GM12878 (cell line): ENCODE measurements at regions of chr14 and their contacts with region 1.

Region 1: DNA sequence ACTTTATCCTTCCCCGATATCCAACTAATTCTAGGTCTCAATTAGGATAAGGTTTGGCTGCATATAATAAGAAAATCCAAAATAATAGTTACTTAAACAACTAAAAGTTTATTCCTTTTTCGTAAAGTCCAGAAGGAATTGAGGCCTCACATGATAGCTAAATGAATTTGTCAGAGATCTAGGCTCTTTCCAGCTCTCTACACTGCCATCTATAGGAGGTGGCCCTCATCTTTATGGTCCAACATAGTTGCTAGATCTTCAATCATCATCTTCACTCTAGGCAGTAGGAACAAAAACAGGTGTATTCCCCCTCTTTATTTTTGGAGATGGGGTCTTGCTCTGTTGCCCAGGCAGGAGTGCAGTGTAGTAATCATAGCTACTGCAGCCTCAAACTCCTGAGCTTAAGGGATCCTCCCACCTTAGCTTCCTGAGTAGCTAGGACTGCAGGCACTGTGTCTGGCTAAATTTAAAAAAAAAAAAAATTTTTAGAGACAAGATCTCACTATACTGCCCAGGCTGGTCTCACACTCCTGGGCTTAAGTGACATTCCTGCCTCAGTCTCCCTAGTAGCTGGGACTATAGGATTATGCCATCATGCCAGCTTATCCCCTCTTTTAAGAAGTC is 46.5 kb upstream of the SAV1 start:
- DNase-seq: no peak
- ATAC-seq: peak; percentile 85
- H3K4me3 ChIP-seq: no peak overlapping the region
- H3K27ac ChIP-seq: no peak overlapping the region
- H3K4me1 ChIP-seq: no peaks in the 10 kb centered on the region
- H3K27me3 ChIP-seq: no peaks in the 10 kb centered on the region
- CTCF ChIP-seq: peak; percentile 50 to 54 (median 52); a peak in 5 of 6 replicates
- EP300 ChIP-seq: no peak
- POLR2A ChIP-seq: no peak
- RAD21 ChIP-seq: peak; percentile 64

Region 2: GRCh38 chr14:50542941-50543418 is 171.6 kb before region 1 on chr14:
- CTCF ChIA-PET with region 1: interaction called, 9 read pairs
- POLR2A ChIA-PET with region 1: no interaction called
- RAD21 ChIA-PET with region 1: no interaction called
- SMC1A ChIA-PET with region 1: interaction called, 4 read pairs
- in situ Hi-C with region 1: no loop called
- intact Hi-C with region 1: loop called (anchors 2 kb)
- DNase-seq: no peak
- ATAC-seq: peak; percentile 94
- H3K4me3 ChIP-seq: no peak overlapping the region
- H3K27ac ChIP-seq: no peak overlapping the region
- H3K4me1 ChIP-seq: peaks cover 3% of the 10 kb centered on the region; the same call in 1 of the 2 replicates
- H3K27me3 ChIP-seq: no peaks in the 10 kb centered on the region
- CTCF ChIP-seq: peak; percentile 47 to 59 (median 52)
- EP300 ChIP-seq: no peak
- POLR2A ChIP-seq: no peak
- RAD21 ChIP-seq: peak; percentile 52

Region 3: DNA sequence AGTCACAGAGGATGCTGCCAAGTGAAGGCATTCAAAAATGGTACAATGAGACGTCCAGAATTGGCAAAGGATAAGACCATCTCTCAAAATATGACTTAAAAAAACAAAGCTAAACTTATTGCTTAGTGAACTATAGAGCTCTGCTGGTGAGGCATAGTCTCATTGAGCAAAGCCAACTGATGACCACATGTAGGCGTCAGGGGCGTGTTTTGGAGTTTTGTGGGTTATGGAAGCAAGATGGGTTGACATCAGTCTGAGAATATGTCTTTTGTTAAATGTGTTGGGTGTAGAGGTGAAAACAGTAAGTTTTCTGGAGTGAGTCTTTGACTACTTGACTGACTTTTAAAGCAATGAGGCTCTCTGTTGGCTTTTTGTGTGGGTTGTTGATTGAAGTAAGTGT is 107.4 kb before region 1 on chr14:
- CTCF ChIA-PET with region 1: interaction called, 23 read pairs
- POLR2A ChIA-PET with region 1: no interaction called
- RAD21 ChIA-PET with region 1: interaction called, 5 read pairs
- SMC1A ChIA-PET with region 1: interaction called, 34 read pairs
- in situ Hi-C with region 1: no loop called
- intact Hi-C with region 1: no loop called
- DNase-seq: no peak
- ATAC-seq: peak; percentile 61
- H3K4me3 ChIP-seq: no peak overlapping the region
- H3K27ac ChIP-seq: no peak overlapping the region
- H3K4me1 ChIP-seq: no peaks in the 10 kb centered on the region
- H3K27me3 ChIP-seq: no peaks in the 10 kb centered on the region; a peak in 1 of 4 replicates
- CTCF ChIP-seq: no peak
- EP300 ChIP-seq: no peak
- POLR2A ChIP-seq: no peak
- RAD21 ChIP-seq: no peak

Region 4: DNA sequence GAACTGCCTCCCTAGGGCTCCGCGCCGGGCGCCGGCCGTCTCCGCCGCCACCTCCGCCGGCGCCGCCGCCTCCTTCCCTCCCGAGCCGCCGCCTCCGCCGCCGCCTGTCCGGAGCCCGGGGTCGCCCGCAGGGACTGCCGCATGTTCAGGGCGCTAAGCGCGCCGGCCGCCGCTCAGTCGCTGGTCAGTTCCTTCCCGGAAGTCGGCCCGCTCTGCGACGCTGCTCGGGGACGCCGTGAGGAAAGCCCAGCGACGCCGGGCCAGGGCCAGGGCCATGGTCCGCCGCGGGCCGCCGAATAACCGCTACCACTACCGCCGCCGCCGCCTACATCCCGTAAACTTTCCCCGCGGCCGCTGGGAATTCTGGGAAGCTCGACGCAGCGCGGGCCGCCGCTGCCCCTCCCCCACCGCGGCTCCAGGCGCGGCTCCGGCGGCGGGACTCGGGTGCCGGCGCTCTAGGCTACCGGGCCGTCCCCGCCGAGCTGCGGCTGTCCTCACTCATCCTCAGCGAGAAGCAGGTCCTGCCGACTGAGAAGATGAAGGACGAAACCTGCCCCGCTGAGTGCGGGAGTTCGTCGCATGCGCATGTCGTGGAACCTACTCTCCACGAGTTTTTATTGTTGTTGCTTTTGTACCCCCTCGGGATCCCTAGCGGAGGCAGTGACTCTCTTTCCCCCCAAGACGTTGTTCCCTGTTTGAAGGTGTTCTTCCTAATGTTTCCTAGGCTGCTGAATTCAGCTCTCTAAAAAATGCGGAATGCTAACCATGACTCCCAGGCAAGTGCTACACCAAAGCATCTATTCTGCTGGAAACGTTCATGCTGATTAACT is 46.4 kb before region 1 on chr14 and contains the start of gene SAV1:
- CTCF ChIA-PET with region 1: interaction called, 10 read pairs
- POLR2A ChIA-PET with region 1: no interaction called
- RAD21 ChIA-PET with region 1: interaction called, 4 read pairs
- SMC1A ChIA-PET with region 1: interaction called, 6 read pairs
- in situ Hi-C with region 1: no loop called
- intact Hi-C with region 1: loop called (anchors 5 kb)
- DNase-seq: no peak
- ATAC-seq: peak; percentile 78
- H3K4me3 ChIP-seq: peak within 1 kb of the TSS; percentile 90
- H3K27ac ChIP-seq: peak within 1 kb of the TSS; percentile 30
- H3K4me1 ChIP-seq: no peaks in the 10 kb centered on the region
- H3K27me3 ChIP-seq: no peaks in the 10 kb centered on the region
- CTCF ChIP-seq: no peak
- EP300 ChIP-seq: no peak
- POLR2A ChIP-seq: peak; percentile 84
- RAD21 ChIP-seq: peak; percentile 11; the same call in 1 of the 2 replicates
- polyA plus RNA-seq, gene SAV1: 10.1 to 15.1 TPM

Region 5: DNA sequence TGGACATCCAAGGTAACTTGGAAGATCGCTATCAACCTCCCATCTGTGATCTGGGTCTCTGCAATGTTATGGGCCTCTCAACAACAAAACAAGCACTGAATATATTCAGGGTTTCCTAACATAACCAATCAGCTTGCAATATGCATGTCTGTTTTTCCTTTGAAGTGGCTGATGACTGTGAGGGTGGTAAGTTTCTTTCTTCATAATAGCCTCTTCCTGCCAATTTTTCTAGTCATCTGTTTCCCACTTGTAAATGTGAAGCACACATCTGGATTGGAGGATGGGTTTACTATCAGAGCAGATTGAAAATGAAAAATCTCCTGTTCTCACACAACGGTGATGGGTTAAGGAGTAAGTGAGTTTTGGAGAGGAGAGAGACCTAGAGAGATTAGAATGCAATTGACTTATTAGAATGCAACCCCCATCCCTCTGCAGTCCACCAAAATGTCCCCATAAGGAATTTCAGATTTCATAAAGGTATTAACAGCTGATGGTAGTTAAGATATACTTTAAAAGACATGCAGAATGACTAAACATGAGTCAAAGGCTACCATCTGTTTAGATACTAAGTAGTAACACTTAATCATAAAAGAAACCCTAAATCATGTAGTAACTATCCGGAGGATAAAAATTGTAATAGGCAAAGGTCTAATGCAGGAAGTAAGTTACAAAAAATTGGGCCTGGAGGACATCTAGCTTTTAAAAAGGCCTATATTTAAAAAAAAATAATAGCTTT is 12.0 kb after region 1 on chr14:
- CTCF ChIA-PET with region 1: interaction called, 23 read pairs
- POLR2A ChIA-PET with region 1: no interaction called
- RAD21 ChIA-PET with region 1: interaction called, 7 read pairs
- SMC1A ChIA-PET with region 1: interaction called, 14 read pairs
- in situ Hi-C with region 1: no loop called
- intact Hi-C with region 1: no loop called
- DNase-seq: no peak
- ATAC-seq: no peak
- H3K4me3 ChIP-seq: no peak overlapping the region
- H3K27ac ChIP-seq: no peak overlapping the region
- H3K4me1 ChIP-seq: no peaks in the 10 kb centered on the region
- H3K27me3 ChIP-seq: no peaks in the 10 kb centered on the region
- CTCF ChIP-seq: no peak
- EP300 ChIP-seq: no peak
- POLR2A ChIP-seq: no peak
- RAD21 ChIP-seq: 0 out of 2 replicates have a peak, but pooled peaks have one; percentile 0

Region 6: DNA sequence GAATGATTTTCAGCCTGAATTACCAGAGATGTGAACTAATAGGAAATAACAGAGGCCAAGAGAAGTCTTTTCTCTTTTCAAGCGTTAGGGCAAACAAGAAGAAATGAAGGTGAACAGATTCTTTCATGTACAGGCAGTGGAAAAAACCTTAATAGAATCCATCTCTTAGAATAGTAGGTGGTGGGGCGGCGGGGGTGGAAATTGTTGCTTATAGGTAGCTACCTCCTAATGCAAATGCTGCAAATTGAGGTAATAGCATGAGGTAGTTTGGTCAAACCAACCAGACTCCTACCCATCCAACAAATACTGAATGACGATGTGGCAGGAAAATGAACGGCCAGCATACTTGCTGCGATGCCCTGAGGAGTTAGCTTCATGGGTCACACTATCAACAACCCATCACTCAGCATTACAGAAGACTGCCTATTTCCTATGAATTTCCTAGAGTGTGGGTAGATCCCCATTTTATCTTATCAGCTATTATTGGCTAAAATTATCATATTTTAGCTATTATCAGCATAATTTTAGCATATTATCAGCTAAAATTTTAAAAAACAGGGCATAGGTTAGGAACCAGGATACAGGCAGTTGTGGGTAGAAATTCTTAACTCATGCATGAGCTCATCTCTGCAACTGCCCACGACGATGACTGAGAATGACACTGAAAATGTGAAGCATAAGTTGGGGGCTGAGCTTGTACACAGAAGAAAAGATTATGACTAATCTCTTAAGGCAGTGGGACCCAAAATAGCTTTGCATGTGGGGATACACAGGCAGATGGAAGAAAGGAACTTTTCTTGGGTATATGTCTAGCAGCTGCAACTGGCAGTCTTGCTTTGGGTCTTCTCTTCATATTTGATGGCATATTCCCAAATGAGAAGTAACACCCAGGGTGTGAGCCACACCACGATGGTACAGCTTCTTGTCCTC is 47.7 kb after region 1 on chr14:
- CTCF ChIA-PET with region 1: interaction called, 10 read pairs
- POLR2A ChIA-PET with region 1: no interaction called
- RAD21 ChIA-PET with region 1: interaction called, 5 read pairs
- SMC1A ChIA-PET with region 1: interaction called, 5 read pairs
- in situ Hi-C with region 1: no loop called
- intact Hi-C with region 1: no loop called
- DNase-seq: no peak
- ATAC-seq: peak; percentile 88
- H3K4me3 ChIP-seq: no peak overlapping the region
- H3K27ac ChIP-seq: peak overlapping the region; percentile 65
- H3K4me1 ChIP-seq: peaks cover 15% of the 10 kb centered on the region; the same call in 1 of the 2 replicates
- H3K27me3 ChIP-seq: no peaks in the 10 kb centered on the region
- CTCF ChIP-seq: no peak
- EP300 ChIP-seq: peak; percentile 12 to 22; a peak in 1 of 4 replicates
- POLR2A ChIP-seq: no peak
- RAD21 ChIP-seq: no peak

Region 7: DNA sequence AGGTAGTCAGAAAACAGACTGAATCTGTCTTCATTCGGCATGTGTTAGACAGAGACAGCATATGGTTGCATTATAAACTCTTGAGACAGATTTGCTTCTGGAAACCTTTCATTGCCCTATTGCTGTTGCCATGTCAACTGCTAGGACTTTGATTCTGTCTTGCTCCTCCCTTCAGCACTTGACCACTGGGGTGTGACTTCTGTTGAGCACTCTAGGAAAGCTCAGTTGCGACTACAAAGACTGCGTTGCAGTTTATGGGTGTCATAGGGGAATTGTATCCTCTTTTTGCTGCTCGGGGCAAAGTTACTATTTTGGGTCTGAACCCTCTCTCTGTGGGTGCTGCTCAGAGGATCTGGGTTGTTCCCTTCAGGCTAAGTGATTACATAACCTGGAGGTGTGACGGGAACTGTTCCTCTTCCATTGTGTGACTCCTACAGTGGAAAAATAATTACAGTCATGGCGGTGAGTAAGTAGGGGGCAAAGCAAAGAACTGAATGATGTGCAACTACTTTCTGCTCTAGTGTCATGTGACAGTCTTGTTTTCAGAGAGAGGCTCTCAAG is 424.6 kb after region 1 on chr14:
- CTCF ChIA-PET with region 1: no interaction called
- POLR2A ChIA-PET with region 1: no interaction called
- RAD21 ChIA-PET with region 1: no interaction called
- SMC1A ChIA-PET with region 1: no interaction called
- in situ Hi-C with region 1: no loop called
- intact Hi-C with region 1: no loop called
- DNase-seq: no peak
- ATAC-seq: no peak
- H3K4me3 ChIP-seq: no peak overlapping the region; the same call in 1 of the 2 replicates
- H3K27ac ChIP-seq: no peak overlapping the region
- H3K4me1 ChIP-seq: no peaks in the 10 kb centered on the region
- H3K27me3 ChIP-seq: no peaks in the 10 kb centered on the region
- CTCF ChIP-seq: no peak
- EP300 ChIP-seq: no peak
- POLR2A ChIP-seq: no peak
- RAD21 ChIP-seq: no peak

Region 8: GRCh38 chr14:51621654-51622053 is 907.1 kb after region 1 on chr14:
- CTCF ChIA-PET with region 1: no interaction called
- POLR2A ChIA-PET with region 1: no interaction called
- RAD21 ChIA-PET with region 1: no interaction called
- SMC1A ChIA-PET with region 1: no interaction called
- in situ Hi-C with region 1: no loop called
- intact Hi-C with region 1: no loop called
- DNase-seq: no peak
- ATAC-seq: peak; percentile 77
- H3K4me3 ChIP-seq: no peak overlapping the region
- H3K27ac ChIP-seq: no peak overlapping the region
- H3K4me1 ChIP-seq: peaks cover 16% of the 10 kb centered on the region; the same call in 1 of the 2 replicates
- H3K27me3 ChIP-seq: no peaks in the 10 kb centered on the region
- CTCF ChIP-seq: no peak
- EP300 ChIP-seq: no peak
- POLR2A ChIP-seq: no peak
- RAD21 ChIP-seq: no peak